ENCODE measurements at regions of chr12 and their contacts with region 1.

Region 1: GRCh38 chr12:14654416-14654815 is 42.0 kb downstream of the GUCY2C start:
- DNase-seq: no peak
- H3K4me3 ChIP-seq: no peak overlapping the region
- H3K27ac ChIP-seq: no peak overlapping the region
- H3K4me1 ChIP-seq: peaks cover 0 to 2% (median 0%) of the 10 kb centered on the region in 4 experiments; a peak in 1 of 7 replicates
- H3K27me3 ChIP-seq: no peaks in the 10 kb centered on the region
- CTCF ChIP-seq: no peak
- EP300 ChIP-seq: no peak
- POLR2A ChIP-seq: no peak
- RAD21 ChIP-seq: no peak

Region 2: GRCh38 chr12:14638066-14638465 is 16.4 kb before region 1 on chr12:
- CTCF ChIA-PET with region 1: interaction called, 12 read pairs
- POLR2A ChIA-PET with region 1: interaction called, 4 read pairs
- DNase-seq: no peak
- H3K4me3 ChIP-seq: no peak overlapping the region
- H3K27ac ChIP-seq: no peak overlapping the region
- H3K4me1 ChIP-seq: no peaks in the 10 kb centered on the region
- H3K27me3 ChIP-seq: no peaks in the 10 kb centered on the region
- CTCF ChIP-seq: no peak
- EP300 ChIP-seq: no peak
- POLR2A ChIP-seq: no peak
- RAD21 ChIP-seq: no peak

Region 3: GRCh38 chr12:14664510-14664909 is 10.1 kb after region 1 on chr12:
- CTCF ChIA-PET with region 1: interaction called, 12 read pairs
- POLR2A ChIA-PET with region 1: interaction called, 8 read pairs
- DNase-seq: no peak
- H3K4me3 ChIP-seq: no peak overlapping the region
- H3K27ac ChIP-seq: no peak overlapping the region
- H3K4me1 ChIP-seq: peaks cover 0 to 3% (median 1%) of the 10 kb centered on the region in 4 experiments; a peak in 3 of 7 replicates
- H3K27me3 ChIP-seq: no peaks in the 10 kb centered on the region
- CTCF ChIP-seq: peak in 2 of 3 experiments; percentile 49 to 52; a peak in 2 of 4 replicates
- EP300 ChIP-seq: no peak
- POLR2A ChIP-seq: no peak
- RAD21 ChIP-seq: peak; percentile 75 to 82